ENCODE measurements at regions of chr5 and their contacts with region 1.

Region 1: GRCh38 chr5:9544502-9545135 is 1.3 kb downstream of the SEMA5A start:
- DNase-seq: peak; percentile 74
- CTCF ChIP-seq: peak; percentile 88

Region 2: GRCh38 chr5:9356351-9356825 is 188.2 kb before region 1 on chr5:
- CTCF ChIA-PET with region 1: interaction called, 33 read pairs
- POLR2A ChIA-PET with region 1: no interaction called
- DNase-seq: no peak
- CTCF ChIP-seq: no peak

Region 3: GRCh38 chr5:9361835-9362234 is 182.8 kb before region 1 on chr5:
- CTCF ChIA-PET with region 1: interaction called, 33 read pairs
- POLR2A ChIA-PET with region 1: no interaction called
- DNase-seq: peak; percentile 70
- CTCF ChIP-seq: peak; percentile 72

Region 4: DNA sequence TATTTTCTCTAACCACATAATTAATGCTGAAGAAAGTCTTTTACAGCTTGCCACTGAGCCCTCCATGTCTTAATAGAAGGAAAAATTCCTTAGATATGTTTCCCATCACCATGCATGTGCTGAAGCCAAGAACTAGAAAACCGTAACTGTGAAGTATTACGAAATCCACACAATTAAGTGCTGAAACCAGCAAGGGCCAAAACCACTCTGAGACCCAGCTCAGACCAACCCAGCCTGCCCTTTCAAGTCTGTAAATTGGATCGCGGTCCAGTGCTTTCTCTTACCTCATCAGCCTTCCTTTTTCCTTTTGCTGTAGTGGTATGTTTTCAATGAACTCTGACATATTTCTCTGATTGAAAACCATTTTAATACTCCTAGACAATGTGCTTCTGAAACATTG is 25.1 kb before region 1 on chr5:
- CTCF ChIA-PET with region 1: interaction called, 34 read pairs
- POLR2A ChIA-PET with region 1: no interaction called
- DNase-seq: no peak
- CTCF ChIP-seq: no peak

Region 5: GRCh38 chr5:9529041-9529480 is 15.6 kb before region 1 on chr5:
- CTCF ChIA-PET with region 1: interaction called, 34 read pairs
- POLR2A ChIA-PET with region 1: no interaction called
- DNase-seq: no peak
- CTCF ChIP-seq: no peak

Measured in GM10248 (cell line).